Activated CD4-positive, alpha-beta T cell treated with anti-CD3 and anti-CD28 coated beads for 36 hours (primary cell): ENCODE measurements at regions of chr22 and their contacts with region 1.

Region 1: GRCh38 chr22:22463855-22464540 is 44.5 kb downstream of the ZNF280B start:
- DNase-seq: peak; percentile 71
- ATAC-seq: no peak
- H3K4me3 Mint-ChIP-seq: no peak overlapping the region
- H3K27ac Mint-ChIP-seq: no peak overlapping the region
- H3K4me1 Mint-ChIP-seq: no peaks in the 10 kb centered on the region
- H3K27me3 Mint-ChIP-seq: peaks cover 33% of the 10 kb centered on the region

Region 2: GRCh38 chr22:22357024-22357883 is 106.7 kb before region 1 on chr22:
- CTCF ChIA-PET with region 1: interaction called, 3 read pairs
- POLR2A ChIA-PET with region 1: no interaction called
- intact Hi-C with region 1: loop called in 1 of 2 experiments (anchors 1 kb)
- DNase-seq: peak; percentile 92
- ATAC-seq: peak; percentile 95
- H3K4me3 Mint-ChIP-seq: no peak overlapping the region
- H3K27ac Mint-ChIP-seq: no peak overlapping the region
- H3K4me1 Mint-ChIP-seq: peaks cover 5% of the 10 kb centered on the region
- H3K27me3 Mint-ChIP-seq: peaks cover 30% of the 10 kb centered on the region

Region 3: DNA sequence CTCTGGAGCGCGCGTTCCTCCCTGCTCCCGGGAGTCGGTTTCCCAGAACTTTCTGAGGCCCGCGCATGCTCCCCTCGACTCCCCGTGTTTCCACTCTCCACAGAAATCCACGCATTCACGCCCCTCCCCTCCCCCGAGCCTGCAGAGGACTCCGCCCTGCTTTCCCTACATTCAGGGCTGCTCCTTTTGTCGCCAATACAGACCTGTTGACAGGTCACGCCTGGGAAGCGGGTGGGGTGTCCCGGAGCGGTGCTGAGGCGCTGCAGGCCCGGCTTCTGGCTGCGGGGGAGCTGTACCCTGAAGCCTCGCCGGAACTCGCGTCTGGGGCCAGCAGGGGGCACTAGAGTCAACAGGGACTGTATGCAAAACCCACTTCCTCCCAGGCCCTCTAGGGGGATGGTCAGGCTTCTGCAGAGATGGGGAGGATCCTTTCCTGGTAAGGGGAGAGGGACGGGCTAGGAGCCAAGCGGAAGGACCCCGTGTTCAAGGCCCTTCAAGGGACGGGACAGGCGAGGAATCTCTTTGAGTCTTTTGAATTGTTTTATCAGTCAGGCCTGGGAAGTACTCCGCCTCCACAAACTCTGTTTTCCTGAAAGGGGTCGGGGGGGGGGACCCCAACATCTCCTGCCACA is 95.1 kb after region 1 on chr22 and contains the start of gene PRAME:
- CTCF ChIA-PET with region 1: interaction called, 8 read pairs
- POLR2A ChIA-PET with region 1: no interaction called
- intact Hi-C with region 1: loop called (anchors 2 to 10 kb)
- DNase-seq: peak; percentile 93
- ATAC-seq: peak; percentile 99
- H3K4me3 Mint-ChIP-seq: no peak within 1 kb of the TSS
- H3K27ac Mint-ChIP-seq: no peak within 1 kb of the TSS
- H3K4me1 Mint-ChIP-seq: peaks cover 5% of the 10 kb centered on the region
- H3K27me3 Mint-ChIP-seq: no peaks in the 10 kb centered on the region
- total RNA-seq, gene PRAME: 0.09 TPM in 1 of 2 experiments, not detected in the other

Region 4: DNA sequence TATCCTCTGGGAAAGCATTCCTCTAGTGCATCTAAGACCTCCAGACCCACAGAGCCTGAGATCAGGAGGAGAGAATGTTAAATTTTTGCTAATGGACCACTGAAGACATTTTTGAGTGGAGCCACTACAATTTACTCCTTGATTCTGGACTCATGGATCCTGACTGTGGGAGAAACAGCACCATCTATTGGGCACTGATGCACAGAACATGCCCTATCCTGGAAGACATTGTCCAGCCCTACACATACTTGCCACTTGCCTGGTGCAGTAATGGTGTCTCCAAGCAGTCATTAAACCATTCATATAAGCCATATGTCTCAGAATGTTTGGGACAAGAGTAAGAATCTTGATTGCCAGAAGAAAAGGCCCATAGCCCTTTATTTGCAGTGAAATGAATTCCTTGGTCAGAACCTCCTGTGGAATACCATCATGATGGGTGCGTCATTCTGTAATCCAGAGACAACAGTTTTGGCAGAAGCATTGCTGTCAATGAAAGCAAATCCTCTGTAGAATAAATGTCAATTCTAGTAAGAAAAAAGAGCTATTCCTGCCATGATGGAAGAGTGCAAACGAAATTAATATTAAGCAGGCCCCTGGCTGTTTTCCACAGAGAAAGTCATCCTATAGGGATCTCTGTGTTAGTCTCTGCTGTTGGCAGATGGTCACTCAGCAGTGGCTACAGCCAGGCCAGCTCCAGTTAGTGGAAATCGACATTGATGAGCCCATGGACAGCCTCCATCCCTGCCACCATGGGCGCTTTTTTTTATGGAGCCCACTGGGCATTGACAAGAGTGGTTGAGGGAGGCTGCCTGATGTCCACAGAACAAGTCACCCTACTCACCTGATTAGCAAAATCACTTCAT is 223.9 kb after region 1 on chr22:
- CTCF ChIA-PET with region 1: interaction called, 3 read pairs
- POLR2A ChIA-PET with region 1: no interaction called
- intact Hi-C with region 1: loop called in 1 of 2 experiments (anchors 5 kb)
- DNase-seq: peak; percentile 44
- ATAC-seq: peak; percentile 78
- H3K4me3 Mint-ChIP-seq: no peak overlapping the region
- H3K27ac Mint-ChIP-seq: no peak overlapping the region
- H3K4me1 Mint-ChIP-seq: no peaks in the 10 kb centered on the region
- H3K27me3 Mint-ChIP-seq: no peaks in the 10 kb centered on the region

Region 5: GRCh38 chr22:22748297-22748743 is 284.3 kb after region 1 on chr22:
- CTCF ChIA-PET with region 1: interaction called, 4 read pairs
- POLR2A ChIA-PET with region 1: no interaction called
- intact Hi-C with region 1: loop called in 1 of 2 experiments (anchors 5 kb)
- DNase-seq: peak; percentile 60
- ATAC-seq: peak; percentile 79
- H3K4me3 Mint-ChIP-seq: no peak overlapping the region
- H3K27ac Mint-ChIP-seq: no peak overlapping the region
- H3K4me1 Mint-ChIP-seq: peaks cover 6% of the 10 kb centered on the region
- H3K27me3 Mint-ChIP-seq: no peaks in the 10 kb centered on the region